HCT116 (cell line): ENCODE measurements at regions of chr1 and their contacts with region 1.

Region 1: GRCh38 chr1:30707412-30708360 is 15.7 kb downstream of the MATN1 start:
- DNase-seq: peak; percentile 48
- ATAC-seq: peak; percentile 97
- H3K4me3 ChIP-seq: no peak overlapping the region
- H3K27ac ChIP-seq: no peak overlapping the region
- H3K4me1 ChIP-seq: peaks cover 0 to 12% of the 10 kb centered on the region in 2 experiments; a peak in 2 of 4 replicates
- H3K27me3 ChIP-seq: no peaks in the 10 kb centered on the region
- CTCF ChIP-seq: peak; percentile 72 to 86 (median 86)
- POLR2A ChIP-seq: no peak
- RAD21 ChIP-seq: peak; percentile 100

Region 2: DNA sequence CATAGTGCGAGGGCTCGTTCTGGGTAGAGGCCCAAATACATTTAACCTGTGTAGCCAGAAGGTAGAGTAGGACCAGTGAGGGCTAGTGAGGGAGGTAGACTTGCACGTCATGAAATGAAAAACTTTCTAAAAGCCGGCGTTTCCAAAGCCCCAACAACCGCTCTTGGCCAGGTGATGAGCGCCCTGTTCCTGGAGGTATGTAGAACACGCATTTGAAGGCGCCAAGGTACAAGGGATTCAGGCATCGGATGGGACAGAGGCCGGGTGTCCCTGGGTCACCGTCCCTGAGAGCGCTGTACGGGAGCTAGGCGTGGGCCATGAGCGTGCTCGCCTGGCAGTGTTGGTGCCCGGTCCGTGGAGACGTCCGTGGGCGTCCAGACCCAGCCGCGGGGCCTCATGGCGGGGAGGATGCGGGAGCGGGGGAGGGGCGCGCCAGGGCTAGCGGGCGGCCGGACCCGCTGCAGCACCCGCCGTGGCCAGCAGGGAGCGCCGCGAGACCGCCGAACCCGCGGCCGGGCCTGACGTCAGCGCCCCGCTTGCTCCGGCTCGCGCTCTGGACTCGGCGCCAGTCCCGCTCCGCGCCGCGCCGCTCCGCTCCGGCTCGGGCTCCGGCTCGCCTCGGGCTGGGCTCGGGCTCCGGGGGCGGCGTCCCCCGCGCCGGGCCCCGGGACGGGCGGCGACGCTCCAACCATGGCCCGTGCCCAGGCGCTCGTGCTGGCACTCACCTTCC is 1471.6 kb before region 1 on chr1 and contains the start of gene PTPRU:
- CTCF ChIA-PET with region 1: no interaction called
- POLR2A ChIA-PET with region 1: no interaction called
- RAD21 ChIA-PET with region 1: no interaction called
- intact Hi-C with region 1: loop called (anchors 2 kb)
- DNase-seq: no peak
- ATAC-seq: peak; percentile 77
- H3K4me3 ChIP-seq: peak within 1 kb of the TSS; percentile 89 to 97
- H3K27ac ChIP-seq: peak within 1 kb of the TSS; percentile 53; the same call in 1 of the 2 replicates
- H3K4me1 ChIP-seq: peaks cover 17 to 35% of the 10 kb centered on the region in 2 experiments
- H3K27me3 ChIP-seq: no peaks in the 10 kb centered on the region
- CTCF ChIP-seq: peak; percentile 26 to 53 (median 48); a peak in 3 of 6 replicates
- POLR2A ChIP-seq: no peak
- RAD21 ChIP-seq: peak; percentile 77
- total RNA-seq, gene PTPRU: 40.7 TPM

Region 3: GRCh38 chr1:29513357-29513756 is 1194.3 kb before region 1 on chr1:
- CTCF ChIA-PET with region 1: no interaction called
- POLR2A ChIA-PET with region 1: no interaction called
- RAD21 ChIA-PET with region 1: no interaction called
- intact Hi-C with region 1: loop called (anchors 1 kb)
- DNase-seq: peak; percentile 84
- ATAC-seq: peak; percentile 100
- H3K4me3 ChIP-seq: no peak overlapping the region
- H3K27ac ChIP-seq: no peak overlapping the region
- H3K4me1 ChIP-seq: no peaks in the 10 kb centered on the region
- H3K27me3 ChIP-seq: peaks cover 25% of the 10 kb centered on the region
- CTCF ChIP-seq: peak; percentile 80 to 89 (median 82)
- POLR2A ChIP-seq: no peak
- RAD21 ChIP-seq: peak; percentile 99

Region 4: DNA sequence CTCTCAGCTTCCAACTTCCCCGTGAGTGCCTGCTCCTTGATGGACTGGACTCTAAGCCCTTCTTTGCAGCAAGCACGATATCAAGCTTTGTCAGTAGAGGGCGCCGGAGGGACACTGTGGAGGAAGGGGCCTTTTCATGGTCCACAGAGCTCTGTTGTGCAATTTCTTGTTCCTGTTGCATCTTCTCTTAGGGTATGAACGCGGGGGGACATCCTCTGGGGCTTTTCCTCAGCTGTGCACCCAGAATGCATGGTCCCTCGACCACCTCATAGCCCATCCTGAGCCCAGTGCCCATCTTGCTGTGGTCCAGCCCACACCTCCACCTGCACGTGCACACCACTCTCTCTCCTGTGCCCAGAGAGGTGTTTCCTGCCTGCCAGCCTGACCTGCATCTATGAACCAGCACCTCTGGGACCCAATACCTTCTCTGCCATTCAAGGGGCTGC is 914.6 kb before region 1 on chr1:
- CTCF ChIA-PET with region 1: no interaction called
- POLR2A ChIA-PET with region 1: no interaction called
- RAD21 ChIA-PET with region 1: no interaction called
- intact Hi-C with region 1: loop called (anchors 10 kb)
- DNase-seq: peak; percentile 61
- ATAC-seq: peak; percentile 94
- H3K4me3 ChIP-seq: no peak overlapping the region
- H3K27ac ChIP-seq: no peak overlapping the region
- H3K4me1 ChIP-seq: peaks cover 0 to 11% of the 10 kb centered on the region in 2 experiments; a peak in 2 of 4 replicates
- H3K27me3 ChIP-seq: no peaks in the 10 kb centered on the region
- CTCF ChIP-seq: peak; percentile 85 to 92 (median 90)
- POLR2A ChIP-seq: no peak
- RAD21 ChIP-seq: peak; percentile 91

Region 5: GRCh38 chr1:30111431-30111830 is 596.3 kb before region 1 on chr1:
- CTCF ChIA-PET with region 1: interaction called, 5 read pairs
- POLR2A ChIA-PET with region 1: no interaction called
- RAD21 ChIA-PET with region 1: no interaction called
- intact Hi-C with region 1: loop called (anchors 2 kb)
- DNase-seq: peak; percentile 10
- ATAC-seq: peak; percentile 97
- H3K4me3 ChIP-seq: no peak overlapping the region
- H3K27ac ChIP-seq: no peak overlapping the region
- H3K4me1 ChIP-seq: no peaks in the 10 kb centered on the region
- H3K27me3 ChIP-seq: peaks cover 40% of the 10 kb centered on the region
- CTCF ChIP-seq: peak; percentile 50 to 73 (median 73); a peak in 5 of 6 replicates
- POLR2A ChIP-seq: no peak
- RAD21 ChIP-seq: peak; percentile 78

Region 6: DNA sequence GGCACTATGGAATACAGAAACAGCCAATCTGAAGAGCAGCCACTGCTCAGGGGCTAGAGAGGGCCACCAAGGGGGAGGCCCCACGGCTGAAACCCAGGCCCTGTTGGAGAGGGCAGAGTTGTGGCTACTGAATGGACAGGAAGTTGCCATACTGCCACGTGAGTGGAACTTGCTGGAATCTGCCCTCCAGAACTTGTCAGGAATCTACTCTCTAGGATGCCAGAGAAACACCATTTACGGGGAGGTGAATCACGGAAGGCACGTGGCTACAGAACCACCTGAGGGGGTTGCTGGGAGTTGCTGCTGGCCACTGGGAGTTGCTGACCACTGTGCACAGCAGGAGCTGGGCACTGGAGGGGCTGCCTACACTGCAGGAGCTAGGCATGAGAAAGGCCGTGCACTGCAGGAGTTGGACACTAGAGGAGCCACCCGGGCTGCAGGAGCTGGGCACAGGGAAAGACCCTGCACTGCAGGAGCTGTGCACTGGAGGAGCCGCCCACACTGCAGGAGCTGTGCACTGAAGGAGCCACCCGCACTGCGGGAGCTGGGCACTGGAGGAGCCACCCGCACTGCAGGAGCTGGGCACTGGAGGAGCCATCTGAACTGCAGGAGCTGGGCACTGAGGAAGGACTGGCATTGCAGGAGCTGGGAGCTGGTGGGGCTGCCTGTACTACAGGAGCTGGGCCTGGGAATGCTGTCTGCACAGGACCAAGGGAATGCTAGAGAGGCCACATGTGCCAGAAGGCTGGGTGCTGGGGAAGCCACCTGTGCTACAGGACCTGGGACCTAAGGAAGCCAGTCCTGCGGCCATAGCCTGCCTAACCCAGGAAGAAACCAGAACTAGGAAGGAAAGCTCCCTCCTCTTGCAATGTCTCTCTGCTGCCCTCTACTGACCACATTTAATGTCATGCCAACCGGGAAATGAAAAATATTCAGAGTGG is 327.7 kb before region 1 on chr1:
- CTCF ChIA-PET with region 1: interaction called, 35 read pairs
- POLR2A ChIA-PET with region 1: no interaction called
- RAD21 ChIA-PET with region 1: interaction called in 1 of 2 experiments, 8 read pairs
- intact Hi-C with region 1: no loop called
- DNase-seq: peak; percentile 60
- ATAC-seq: peak; percentile 95
- H3K4me3 ChIP-seq: peak overlapping the region in 1 of 2 experiments; percentile 22; a peak in 2 of 4 replicates
- H3K27ac ChIP-seq: no peak overlapping the region; the same call in 1 of the 2 replicates
- H3K4me1 ChIP-seq: peaks cover 0 to 11% of the 10 kb centered on the region in 2 experiments; a peak in 3 of 4 replicates
- H3K27me3 ChIP-seq: 0 out of 2 replicates have a peak, but pooled peaks cover 3% of the 10 kb centered on the region
- CTCF ChIP-seq: peak; percentile 73 to 86 (median 82)
- POLR2A ChIP-seq: no peak
- RAD21 ChIP-seq: peak; percentile 78

Region 7: DNA sequence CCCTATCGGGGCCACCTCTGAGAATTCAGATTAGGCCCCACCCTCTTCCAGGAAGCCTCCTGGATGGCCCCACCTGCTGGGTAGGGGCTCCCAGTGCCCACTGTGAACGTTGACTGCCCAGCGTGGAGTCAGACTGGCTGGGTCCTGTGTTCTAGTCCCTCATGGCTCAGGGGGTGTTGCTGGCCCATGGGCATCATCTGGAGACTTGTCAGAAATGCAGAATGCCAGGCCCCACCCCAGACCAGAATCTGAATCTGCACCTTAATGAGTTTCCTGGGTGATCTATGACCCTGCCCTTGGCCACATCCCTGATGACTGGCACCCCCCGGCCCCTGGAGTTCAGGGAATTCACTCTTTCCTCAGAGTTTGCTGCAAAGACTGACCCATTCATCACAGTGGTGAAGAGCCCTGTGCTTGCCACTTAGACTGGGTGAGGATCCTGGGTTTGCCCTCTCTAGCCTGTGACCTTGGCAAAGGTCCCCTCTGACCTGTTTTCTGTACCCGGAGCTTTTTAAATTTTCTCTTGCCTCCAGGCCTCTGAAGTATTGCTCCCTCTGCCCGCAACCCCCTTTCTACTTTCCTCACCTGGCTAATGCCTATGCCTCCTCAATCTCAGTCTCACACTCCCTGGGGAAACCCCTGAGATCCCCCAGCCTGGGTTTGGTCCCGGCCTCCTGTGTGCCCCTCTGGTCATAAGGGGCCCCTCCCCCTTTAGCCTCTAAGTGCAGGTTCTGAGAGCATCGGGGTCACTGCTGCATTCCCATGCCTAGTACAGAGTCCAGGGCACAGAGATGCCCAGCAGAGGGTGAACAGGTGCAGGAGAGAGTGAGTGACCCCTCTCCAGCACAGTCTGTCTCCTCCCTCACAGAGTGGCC is 168.5 kb before region 1 on chr1:
- CTCF ChIA-PET with region 1: no interaction called
- POLR2A ChIA-PET with region 1: no interaction called
- RAD21 ChIA-PET with region 1: no interaction called
- intact Hi-C with region 1: no loop called
- DNase-seq: no peak
- ATAC-seq: no peak
- H3K4me3 ChIP-seq: no peak overlapping the region
- H3K27ac ChIP-seq: no peak overlapping the region
- H3K4me1 ChIP-seq: no peaks in the 10 kb centered on the region
- H3K27me3 ChIP-seq: no peaks in the 10 kb centered on the region
- CTCF ChIP-seq: no peak
- POLR2A ChIP-seq: no peak
- RAD21 ChIP-seq: no peak